Natural killer cell (primary cell): ENCODE measurements at regions of chr7 and their contacts with region 1.

Region 1: DNA sequence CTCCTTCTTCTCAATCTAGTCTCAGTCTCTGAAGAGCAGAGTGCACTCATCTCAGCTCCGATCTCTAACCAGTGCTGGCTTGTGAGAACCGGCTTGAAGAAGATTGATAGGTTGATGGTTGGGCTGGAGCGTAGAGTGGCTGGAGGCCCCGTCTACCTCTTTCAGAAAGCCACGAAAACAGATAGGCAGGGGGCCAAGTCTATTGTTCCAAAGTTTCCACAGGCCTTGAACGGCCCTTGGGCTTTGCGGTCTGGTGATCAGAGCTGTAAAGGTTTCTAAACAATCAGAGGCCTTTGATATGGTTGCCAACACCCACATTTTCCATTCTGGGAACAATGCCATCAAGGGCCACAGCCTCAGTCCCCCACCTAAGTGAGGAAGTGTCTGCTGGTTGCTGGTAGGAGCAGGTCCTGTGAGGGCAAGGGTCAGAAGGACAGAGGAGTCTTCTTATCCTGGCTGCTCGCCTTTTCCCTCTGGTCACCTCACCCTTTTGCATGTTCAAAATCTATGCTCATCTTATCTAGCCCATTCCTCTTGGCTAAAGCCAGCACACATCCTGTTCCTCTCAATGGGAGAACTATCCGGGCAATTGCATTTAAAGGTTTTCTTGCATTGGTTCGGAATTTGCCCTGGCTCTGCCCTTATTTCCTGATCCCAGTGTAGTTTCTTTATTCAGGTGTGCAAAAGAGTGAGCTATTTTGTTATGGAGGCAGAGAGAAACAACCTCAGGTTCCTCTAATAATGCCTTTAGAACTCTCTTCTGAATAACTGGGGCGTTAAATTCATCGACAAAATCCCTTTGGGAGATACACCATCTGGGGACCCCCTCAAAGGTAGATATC is 70.3 kb upstream of the KMT2E start:
- DNase-seq: peak; percentile 54 to 84
- ATAC-seq: peak; percentile 21 to 58 (median 32)
- H3K4me3 ChIP-seq: peak overlapping the region; percentile 11
- H3K4me3 Mint-ChIP-seq: peak overlapping the region; percentile 85
- H3K27ac ChIP-seq: peak overlapping the region; percentile 89
- H3K27ac Mint-ChIP-seq: peak overlapping the region; percentile 100
- H3K4me1 ChIP-seq: peaks cover 61% of the 10 kb centered on the region
- H3K4me1 Mint-ChIP-seq: peaks cover 56 to 59% of the 10 kb centered on the region in 2 donors
- H3K27me3 ChIP-seq: no peaks in the 10 kb centered on the region
- H3K27me3 Mint-ChIP-seq: no peaks in the 10 kb centered on the region
- CTCF ChIP-seq: no peak

Region 2: GRCh38 chr7:104914421-104914820 is 29.3 kb before region 1 on chr7:
- intact Hi-C with region 1: loop called (anchors 1 kb)
- DNase-seq: no peak
- ATAC-seq: no peak
- H3K4me3 ChIP-seq: no peak overlapping the region
- H3K4me3 Mint-ChIP-seq: no peak overlapping the region
- H3K27ac ChIP-seq: no peak overlapping the region
- H3K27ac Mint-ChIP-seq: no peak overlapping the region
- H3K4me1 ChIP-seq: no peaks in the 10 kb centered on the region
- H3K4me1 Mint-ChIP-seq: peaks cover 0 to 4% of the 10 kb centered on the region in 2 donors
- H3K27me3 ChIP-seq: no peaks in the 10 kb centered on the region
- H3K27me3 Mint-ChIP-seq: peaks cover 0 to 7% of the 10 kb centered on the region in 2 donors
- CTCF ChIP-seq: no peak

Region 3: GRCh38 chr7:104956753-104957450 is 13.2 kb after region 1 on chr7:
- intact Hi-C with region 1: loop called (anchors 1 kb)
- DNase-seq: peak; percentile 54 to 64
- ATAC-seq: peak; percentile 80 to 90 (median 89)
- H3K4me3 ChIP-seq: no peak overlapping the region
- H3K4me3 Mint-ChIP-seq: peak overlapping the region; percentile 41
- H3K27ac ChIP-seq: peak overlapping the region; percentile 85
- H3K27ac Mint-ChIP-seq: peak overlapping the region; percentile 97 to 100
- H3K4me1 ChIP-seq: peaks cover 29% of the 10 kb centered on the region
- H3K4me1 Mint-ChIP-seq: peaks cover 24 to 28% of the 10 kb centered on the region in 2 donors
- H3K27me3 ChIP-seq: no peaks in the 10 kb centered on the region
- H3K27me3 Mint-ChIP-seq: no peaks in the 10 kb centered on the region
- CTCF ChIP-seq: no peak

Region 4: DNA sequence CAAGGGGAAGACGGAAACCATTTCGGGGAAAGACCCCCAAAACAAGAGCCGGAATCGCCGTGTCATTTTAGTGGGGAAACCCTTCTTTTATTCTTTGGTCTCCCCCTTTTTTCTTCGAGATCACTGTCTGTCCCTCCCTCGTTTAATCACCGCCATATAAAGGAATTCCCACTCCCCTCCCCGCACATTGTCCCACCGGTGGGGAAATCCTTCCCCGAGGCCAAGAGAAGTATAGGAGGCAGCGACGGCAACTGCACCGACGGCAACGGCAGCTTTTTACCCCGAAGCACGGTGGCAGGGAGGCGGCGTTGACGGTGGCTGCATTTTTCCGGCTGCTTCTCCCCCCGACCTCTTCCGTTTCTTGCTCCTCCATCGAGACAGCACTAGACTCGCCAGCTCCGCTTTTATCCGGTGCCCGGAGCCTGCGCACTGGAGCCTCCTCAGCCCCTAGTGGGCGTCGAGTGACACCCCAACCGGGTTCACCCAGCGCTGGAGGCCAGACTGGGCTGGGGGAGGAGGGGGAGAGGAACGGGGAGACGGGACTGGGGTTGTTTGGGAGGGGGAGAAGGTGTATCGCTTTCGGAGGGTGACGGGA is 69.6 kb after region 1 on chr7:
- intact Hi-C with region 1: loop called (anchors 1 kb)
- DNase-seq: peak; percentile 91 to 95
- ATAC-seq: peak; percentile 52 to 75 (median 53)
- H3K4me3 ChIP-seq: peak overlapping the region; percentile 97
- H3K4me3 Mint-ChIP-seq: peak overlapping the region; percentile 97
- H3K27ac ChIP-seq: peak overlapping the region; percentile 99
- H3K27ac Mint-ChIP-seq: peak overlapping the region; percentile 100
- H3K4me1 ChIP-seq: peaks cover 21% of the 10 kb centered on the region
- H3K4me1 Mint-ChIP-seq: peaks cover 78 to 82% of the 10 kb centered on the region in 2 donors
- H3K27me3 ChIP-seq: no peaks in the 10 kb centered on the region
- H3K27me3 Mint-ChIP-seq: no peaks in the 10 kb centered on the region
- CTCF ChIP-seq: peak; percentile 29

Region 5: GRCh38 chr7:105352018-105352612 is 408.4 kb after region 1 on chr7:
- intact Hi-C with region 1: loop called (anchors 5 kb)
- DNase-seq: peak; percentile 56 to 88
- ATAC-seq: peak; percentile 89 to 97 (median 97)
- H3K4me3 ChIP-seq: peak overlapping the region; percentile 14
- H3K4me3 Mint-ChIP-seq: peak overlapping the region; percentile 80
- H3K27ac ChIP-seq: peak overlapping the region; percentile 75
- H3K27ac Mint-ChIP-seq: peak overlapping the region; percentile 82 to 88
- H3K4me1 ChIP-seq: peaks cover 84% of the 10 kb centered on the region
- H3K4me1 Mint-ChIP-seq: peaks cover 54 to 69% of the 10 kb centered on the region in 2 donors
- H3K27me3 ChIP-seq: no peaks in the 10 kb centered on the region
- H3K27me3 Mint-ChIP-seq: no peaks in the 10 kb centered on the region
- CTCF ChIP-seq: no peak

Region 6: GRCh38 chr7:105808703-105809590 is 865.2 kb after region 1 on chr7:
- intact Hi-C with region 1: loop called (anchors 5 kb)
- DNase-seq: peak; percentile 62 to 85
- ATAC-seq: peak; percentile 81 to 94 (median 92)
- H3K4me3 ChIP-seq: no peak overlapping the region
- H3K4me3 Mint-ChIP-seq: peak overlapping the region; percentile 79
- H3K27ac ChIP-seq: peak overlapping the region; percentile 78
- H3K27ac Mint-ChIP-seq: peak overlapping the region; percentile 94 to 98
- H3K4me1 ChIP-seq: peaks cover 46% of the 10 kb centered on the region
- H3K4me1 Mint-ChIP-seq: peaks cover 62 to 76% of the 10 kb centered on the region in 2 donors
- H3K27me3 ChIP-seq: no peaks in the 10 kb centered on the region
- H3K27me3 Mint-ChIP-seq: no peaks in the 10 kb centered on the region
- CTCF ChIP-seq: no peak

Region 7: GRCh38 chr7:106285051-106285854 is 1341.5 kb after region 1 on chr7:
- intact Hi-C with region 1: loop called (anchors 10 kb)
- DNase-seq: peak; percentile 92 to 98
- ATAC-seq: peak; percentile 88 to 96 (median 89)
- H3K4me3 ChIP-seq: peak overlapping the region; percentile 97
- H3K4me3 Mint-ChIP-seq: peak overlapping the region; percentile 95
- H3K27ac ChIP-seq: peak overlapping the region; percentile 97
- H3K27ac Mint-ChIP-seq: peak overlapping the region; percentile 93 to 95
- H3K4me1 ChIP-seq: peaks cover 12% of the 10 kb centered on the region
- H3K4me1 Mint-ChIP-seq: peaks cover 16 to 20% of the 10 kb centered on the region in 2 donors
- H3K27me3 ChIP-seq: no peaks in the 10 kb centered on the region
- H3K27me3 Mint-ChIP-seq: peaks cover under 1 to 2% of the 10 kb centered on the region in 2 donors
- CTCF ChIP-seq: no peak